Posterior vena cava (tissue), 2 donors: ENCODE measurements at regions of chr9 and their contacts with region 1.

Region 1: GRCh38 chr9:38088006-38088925 is 19.2 kb upstream of the SHB start:
- DNase-seq: peak; percentile 94

Region 2: GRCh38 chr9:37913480-37914153 is 174.6 kb before region 1 on chr9:
- intact Hi-C with region 1: loop called in 1 of 2 experiments (anchors 5 kb)
- DNase-seq: peak; percentile 92